ENCODE measurements at regions of chr3 and their contacts with region 1.

Region 1: DNA sequence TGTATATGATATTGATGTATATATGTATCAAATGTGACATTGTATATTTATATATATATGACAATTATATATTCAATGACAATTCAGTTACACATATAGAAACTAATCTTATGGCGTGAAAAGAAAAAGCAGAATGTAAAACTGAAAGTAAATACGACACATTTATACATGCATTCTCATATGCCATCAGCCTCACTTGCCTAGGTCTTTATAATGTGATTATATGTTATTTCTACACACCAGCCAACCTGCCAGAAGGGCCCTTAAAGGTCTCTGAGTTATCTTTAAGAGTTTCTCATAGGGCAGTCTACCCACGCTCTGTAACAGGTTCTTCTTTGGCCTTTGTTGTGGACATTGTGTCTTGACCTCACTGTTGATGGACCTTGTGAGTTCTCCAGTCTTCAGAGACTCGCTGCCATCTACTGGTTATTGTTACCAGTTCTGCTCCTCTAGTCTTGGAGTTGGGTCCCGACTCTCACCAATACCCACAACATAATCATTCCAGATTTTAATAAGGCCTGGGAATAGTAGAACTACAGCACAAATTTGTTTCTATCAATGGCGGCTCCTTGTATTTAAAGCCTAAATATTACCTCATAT is 371.5 kb upstream of the GOLIM4 start:
- H3K4me3 Mint-ChIP-seq: no peak overlapping the region
- H3K27ac Mint-ChIP-seq: no peak overlapping the region
- H3K4me1 Mint-ChIP-seq: no peaks in the 10 kb centered on the region
- H3K27me3 Mint-ChIP-seq: no peaks in the 10 kb centered on the region

Region 2: GRCh38 chr3:168213920-168214319 is 253.3 kb before region 1 on chr3:
- intact Hi-C with region 1: loop called (anchors 1 kb)
- H3K4me3 Mint-ChIP-seq: no peak overlapping the region
- H3K27ac Mint-ChIP-seq: no peak overlapping the region
- H3K4me1 Mint-ChIP-seq: peaks cover 5% of the 10 kb centered on the region
- H3K27me3 Mint-ChIP-seq: no peaks in the 10 kb centered on the region

Measured in dendritic cell treated with granulocyte-macrophage colony-stimulating factor and Interleukin-4, amounts not matched to agents 40 ng/mL and 50 ng/mL, for 4 days (primary cell).